ENCODE measurements at regions of chr2 and their contacts with region 1.

Region 1: DNA sequence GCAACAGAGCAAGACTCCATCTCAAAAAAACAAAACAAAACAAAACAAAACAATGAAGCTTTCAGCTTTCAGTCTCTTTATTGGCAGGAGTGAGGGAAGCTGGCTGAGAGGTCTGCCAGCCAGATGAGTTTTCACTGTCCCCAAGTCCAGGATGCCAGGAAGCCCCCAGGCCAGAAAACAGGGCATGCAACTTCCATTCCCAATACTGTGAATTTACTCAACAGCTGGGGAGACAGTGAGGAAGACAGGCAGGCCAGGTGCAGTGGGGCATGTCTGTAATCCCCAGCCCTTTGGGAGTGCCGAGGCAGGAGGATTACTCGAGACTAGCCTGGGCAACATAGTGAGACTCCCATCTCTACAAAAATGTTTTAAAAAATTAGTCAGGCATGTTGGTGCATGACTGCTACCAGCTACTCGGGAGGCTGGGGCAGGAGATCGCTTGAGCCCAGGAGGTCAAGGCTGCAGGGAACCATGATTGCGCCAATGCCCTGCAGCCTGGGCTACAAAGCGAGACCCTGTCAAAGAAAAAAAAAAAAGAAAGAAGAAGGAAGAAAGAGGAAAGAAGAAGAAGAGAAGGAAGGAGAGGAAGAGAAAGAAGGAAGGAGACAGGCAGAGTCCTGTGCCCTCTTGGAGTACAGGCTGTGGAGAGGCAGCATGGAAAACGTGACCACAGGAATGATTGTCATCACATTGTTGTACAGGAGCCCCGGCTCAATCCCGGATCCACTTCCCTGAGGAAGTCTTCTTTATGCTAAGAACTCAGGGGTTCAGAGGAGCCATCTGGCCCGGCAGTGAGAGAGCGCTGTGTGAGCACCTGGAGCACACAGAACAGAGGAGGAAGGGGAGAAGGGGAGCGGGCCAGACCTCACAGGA is 29.2 kb upstream of the POMC start:
- DNase-seq: peak in 1 of 2 experiments; percentile 32
- H3K4me3 ChIP-seq: no peak overlapping the region
- H3K4me1 ChIP-seq: peaks cover 9% of the 10 kb centered on the region
- H3K27me3 ChIP-seq: no peaks in the 10 kb centered on the region

Region 2: DNA sequence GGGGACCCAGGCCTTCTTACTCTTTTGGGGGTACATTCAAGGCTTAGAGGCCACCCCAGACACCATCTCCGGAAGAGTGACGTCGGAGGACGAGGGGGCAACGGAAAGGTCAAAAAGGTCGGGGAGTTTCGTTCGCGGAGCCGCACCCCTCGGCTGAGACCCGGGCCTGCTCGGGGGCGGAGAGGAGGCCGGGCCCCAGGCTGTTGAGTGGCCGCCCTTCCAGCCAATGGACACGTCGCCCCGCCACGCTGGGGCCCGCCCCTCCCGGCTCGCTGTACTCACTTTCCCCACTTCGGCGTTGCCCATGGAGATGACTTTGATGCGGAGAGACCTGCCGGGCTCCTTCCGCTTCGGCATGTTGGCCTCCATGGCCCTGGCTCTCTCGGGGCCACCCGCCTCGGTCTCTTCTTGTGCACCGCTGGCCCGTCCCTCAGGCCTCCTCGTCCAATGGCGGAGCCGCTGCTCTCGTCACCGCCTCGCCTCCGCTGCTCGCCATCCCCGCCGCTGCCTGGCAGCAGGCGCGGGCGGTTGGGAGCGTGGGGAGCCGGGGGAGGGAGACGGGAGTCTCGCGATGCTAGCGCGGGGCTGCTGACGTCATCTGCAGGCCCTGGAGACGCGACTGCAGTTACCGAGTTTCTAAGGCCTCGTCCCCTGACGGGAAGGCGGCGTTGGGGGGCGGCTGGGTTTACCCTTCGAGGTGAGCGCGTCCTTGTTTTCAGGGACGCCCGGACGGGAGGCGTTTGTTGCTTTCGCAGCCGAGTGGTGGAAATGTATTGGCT is 225.8 kb before region 1 on chr2 and contains the start of gene DNAJC27:
- in situ Hi-C with region 1: loop called (anchors 5 kb)
- DNase-seq: peak; percentile 94 to 98
- H3K4me3 ChIP-seq: peak within 1 kb of the TSS; percentile 88
- H3K4me1 ChIP-seq: peaks cover 6% of the 10 kb centered on the region
- H3K27me3 ChIP-seq: no peaks in the 10 kb centered on the region

Region 3: DNA sequence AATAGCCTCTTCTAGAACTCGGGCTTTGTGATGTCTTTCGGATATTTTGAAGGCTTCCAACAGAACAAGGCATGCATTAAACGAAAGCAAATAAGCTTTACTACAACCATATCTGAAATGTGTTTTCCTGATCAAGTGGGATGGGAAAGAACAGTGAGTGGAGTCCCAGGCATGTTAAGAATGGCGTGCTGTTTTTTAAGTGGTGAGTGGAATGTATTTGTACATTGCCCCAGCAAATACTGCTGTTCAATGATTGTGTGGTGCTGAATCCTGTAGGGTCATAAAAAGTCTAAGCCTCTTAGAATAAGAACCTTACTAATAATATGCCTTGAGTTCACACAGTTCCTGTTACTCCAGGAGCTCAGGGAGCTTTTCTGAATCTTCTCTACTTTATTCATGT is 81.7 kb before region 1 on chr2:
- in situ Hi-C with region 1: no loop called
- DNase-seq: no peak
- H3K4me3 ChIP-seq: no peak overlapping the region
- H3K4me1 ChIP-seq: no peaks in the 10 kb centered on the region
- H3K27me3 ChIP-seq: no peaks in the 10 kb centered on the region

Measured in HAP-1 (cell line).